ENCODE measurements at regions of chr7 and their contacts with region 1.

Region 1: DNA sequence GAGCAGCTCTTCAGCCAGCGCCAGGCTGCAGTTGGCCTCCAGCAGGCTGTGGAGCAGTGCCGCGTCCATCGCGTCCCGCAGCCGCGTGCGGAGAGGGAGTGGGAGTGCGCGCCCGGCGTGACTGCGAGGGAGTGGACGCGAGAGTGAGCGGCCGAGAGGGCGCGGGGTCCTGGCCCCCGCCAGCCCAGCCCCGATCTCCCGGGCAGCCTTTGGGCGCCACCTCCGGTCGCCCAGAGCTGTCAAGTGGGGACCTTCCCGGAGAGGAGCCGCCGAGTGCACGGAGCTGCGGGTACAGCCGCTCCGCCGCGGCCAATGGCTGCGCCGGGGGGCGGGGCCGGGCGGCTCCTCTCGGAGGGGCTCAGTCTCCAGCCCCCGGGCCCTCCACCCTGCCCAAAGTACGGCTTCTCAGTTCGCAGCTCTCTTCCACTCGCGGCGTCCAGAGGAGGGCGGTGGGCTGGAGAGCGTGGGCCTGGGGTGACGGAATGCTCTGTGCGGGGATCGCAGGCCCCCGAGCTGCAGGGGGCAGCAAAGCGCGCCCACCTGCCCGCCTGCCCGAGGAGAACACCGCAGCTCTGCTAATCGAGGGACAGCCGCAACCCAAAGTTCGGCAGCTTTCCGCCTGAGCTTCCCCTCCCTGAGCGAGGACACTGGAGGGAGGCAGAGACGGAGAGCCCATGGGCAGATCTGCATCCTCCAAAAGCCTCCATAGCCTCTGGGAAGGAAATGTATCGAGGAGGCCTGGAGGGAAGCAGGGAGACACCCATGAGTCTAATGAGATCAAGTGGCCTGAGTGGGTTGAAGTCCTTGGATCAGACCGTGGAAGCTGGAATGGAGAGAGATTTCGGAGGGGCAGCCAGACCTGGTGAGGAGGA is at the start of gene CRHR2:
- DNase-seq: no peak
- ATAC-seq: peak; percentile 62 to 64
- H3K4me3 ChIP-seq: peak within 1 kb of the TSS; percentile 56 to 70 (median 58)
- H3K27ac ChIP-seq: peak within 1 kb of the TSS in 2 of 4 donors; percentile 5 to 38
- H3K4me1 ChIP-seq: peaks cover 12 to 25% of the 10 kb centered on the region in 2 donors
- H3K27me3 ChIP-seq: peaks cover 6 to 19% (median 16%) of the 10 kb centered on the region in 3 donors
- CTCF ChIP-seq: peak; percentile 16 to 66 (median 54)
- POLR2A ChIP-seq: no peak
- total RNA-seq, gene CRHR2: 0.07 to 0.52 TPM in 2 of 4 donors, not detected in the others

Region 2: GRCh38 chr7:30717181-30717580 is 34.7 kb after region 1 on chr7:
- in situ Hi-C with region 1: no loop called
- intact Hi-C with region 1: loop called (anchors 5 kb)
- DNase-seq: no peak
- ATAC-seq: peak; percentile 21 to 36
- H3K4me3 ChIP-seq: no peak overlapping the region
- H3K27ac ChIP-seq: no peak overlapping the region
- H3K4me1 ChIP-seq: no peaks in the 10 kb centered on the region
- H3K27me3 ChIP-seq: no peaks in the 10 kb centered on the region
- CTCF ChIP-seq: no peak
- POLR2A ChIP-seq: no peak

Region 3: GRCh38 chr7:30731619-30732018 is 49.2 kb after region 1 on chr7:
- in situ Hi-C with region 1: loop called in 2 of 4 experiments (anchors 10 kb)
- intact Hi-C with region 1: no loop called
- DNase-seq: no peak
- ATAC-seq: no peak
- H3K4me3 ChIP-seq: no peak overlapping the region
- H3K27ac ChIP-seq: no peak overlapping the region
- H3K4me1 ChIP-seq: no peaks in the 10 kb centered on the region
- H3K27me3 ChIP-seq: no peaks in the 10 kb centered on the region
- CTCF ChIP-seq: no peak
- POLR2A ChIP-seq: no peak

Region 4: GRCh38 chr7:30740424-30741181 is 58.2 kb after region 1 on chr7:
- in situ Hi-C with region 1: loop called in 2 of 4 experiments (anchors 10 kb)
- intact Hi-C with region 1: loop called (anchors 1 kb)
- DNase-seq: peak; percentile 40 to 60
- ATAC-seq: peak; percentile 78 to 87
- H3K4me3 ChIP-seq: no peak overlapping the region
- H3K27ac ChIP-seq: no peak overlapping the region
- H3K4me1 ChIP-seq: no peaks in the 10 kb centered on the region
- H3K27me3 ChIP-seq: no peaks in the 10 kb centered on the region
- CTCF ChIP-seq: peak; percentile 90 to 99 (median 95)
- POLR2A ChIP-seq: no peak

Region 5: DNA sequence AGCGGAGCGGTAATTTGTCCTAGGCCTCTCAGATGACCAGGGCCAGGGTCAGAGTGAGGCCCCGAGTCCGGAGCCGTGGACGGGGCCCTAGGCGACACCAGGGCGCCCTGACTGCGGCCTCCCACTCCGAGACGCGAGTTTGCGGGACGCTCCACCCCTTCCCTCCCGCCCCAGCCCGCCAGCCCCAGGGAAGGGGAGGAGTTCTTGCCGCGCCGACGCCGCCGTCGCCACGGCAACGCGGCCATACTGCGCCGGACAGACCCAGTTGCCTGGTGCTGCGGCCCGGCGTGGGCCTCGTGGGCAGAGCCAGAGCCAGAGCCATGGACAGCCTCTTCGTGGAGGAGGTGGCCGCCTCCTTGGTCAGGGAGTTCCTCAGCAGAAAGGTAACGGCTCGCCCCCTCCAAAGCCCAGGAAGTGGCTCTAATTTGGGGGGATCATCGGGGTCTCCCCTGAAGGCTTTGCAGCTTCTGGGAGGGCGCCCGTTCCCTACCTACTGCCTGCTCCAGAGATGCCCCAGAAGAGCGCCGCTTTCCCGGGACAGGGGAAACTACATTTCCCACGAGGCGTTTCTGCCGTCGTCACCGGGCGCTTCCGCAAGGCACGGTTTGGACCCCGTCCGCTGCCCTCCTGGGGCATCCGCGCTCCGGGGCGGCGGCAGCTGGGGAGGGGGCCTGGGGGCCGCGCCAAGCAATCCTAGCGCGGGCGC is 88.9 kb after region 1 on chr7 and contains the start of gene MINDY4:
- in situ Hi-C with region 1: no loop called
- intact Hi-C with region 1: no loop called
- DNase-seq: peak; percentile 66 to 82
- ATAC-seq: peak; percentile 87 to 91
- H3K4me3 ChIP-seq: peak within 1 kb of the TSS; percentile 74 to 97 (median 84)
- H3K27ac ChIP-seq: peak within 1 kb of the TSS; percentile 68 to 90 (median 80)
- H3K4me1 ChIP-seq: peaks cover 7 to 17% of the 10 kb centered on the region in 2 donors
- H3K27me3 ChIP-seq: no peaks in the 10 kb centered on the region
- CTCF ChIP-seq: no peak
- POLR2A ChIP-seq: peak in 1 of 2 donors; percentile 21
- total RNA-seq, gene MINDY4: 1.4 to 4.3 (median 3.0) TPM